Left colon (tissue), 2 donors: ENCODE measurements at regions of chr12 and their contacts with region 1.

Region 1: GRCh38 chr12:13661005-13661887 is 320.2 kb downstream of the GRIN2B start:
- DNase-seq: peak; percentile 33 to 64
- ATAC-seq: peak; percentile 89

Region 2: DNA sequence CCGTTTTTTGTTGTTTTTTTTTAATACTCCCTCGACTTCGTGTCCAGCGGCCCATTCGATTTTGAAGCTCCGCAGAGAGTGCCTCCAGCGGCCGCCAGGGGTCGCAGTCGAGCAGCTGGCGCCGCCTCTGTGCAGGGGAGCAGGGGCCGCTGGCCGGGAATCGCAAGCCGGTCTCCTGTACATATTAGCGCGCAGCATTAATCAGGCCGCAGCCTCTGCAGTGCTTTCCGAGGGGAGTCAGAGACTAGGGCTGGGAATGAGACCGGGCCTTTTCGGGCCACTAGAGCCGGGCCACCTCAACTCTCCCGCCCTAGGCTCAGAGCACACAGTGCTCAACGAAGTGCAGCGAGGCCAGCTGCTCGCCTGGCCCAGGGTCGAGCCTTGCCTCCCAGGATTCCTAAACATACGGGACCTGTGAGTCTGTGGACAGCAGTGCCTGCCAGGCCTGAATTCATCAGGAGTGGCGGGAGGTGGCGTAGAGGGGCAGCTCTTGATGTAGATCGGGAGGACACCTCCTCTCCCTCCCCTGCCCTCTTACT is 382.9 kb before region 1 on chr12:
- intact Hi-C with region 1: loop called in 1 of 2 experiments (anchors 10 kb)
- DNase-seq: peak; percentile 38 to 71
- ATAC-seq: peak; percentile 94